ENCODE measurements at regions of chr9 and their contacts with region 1.

Region 1: DNA sequence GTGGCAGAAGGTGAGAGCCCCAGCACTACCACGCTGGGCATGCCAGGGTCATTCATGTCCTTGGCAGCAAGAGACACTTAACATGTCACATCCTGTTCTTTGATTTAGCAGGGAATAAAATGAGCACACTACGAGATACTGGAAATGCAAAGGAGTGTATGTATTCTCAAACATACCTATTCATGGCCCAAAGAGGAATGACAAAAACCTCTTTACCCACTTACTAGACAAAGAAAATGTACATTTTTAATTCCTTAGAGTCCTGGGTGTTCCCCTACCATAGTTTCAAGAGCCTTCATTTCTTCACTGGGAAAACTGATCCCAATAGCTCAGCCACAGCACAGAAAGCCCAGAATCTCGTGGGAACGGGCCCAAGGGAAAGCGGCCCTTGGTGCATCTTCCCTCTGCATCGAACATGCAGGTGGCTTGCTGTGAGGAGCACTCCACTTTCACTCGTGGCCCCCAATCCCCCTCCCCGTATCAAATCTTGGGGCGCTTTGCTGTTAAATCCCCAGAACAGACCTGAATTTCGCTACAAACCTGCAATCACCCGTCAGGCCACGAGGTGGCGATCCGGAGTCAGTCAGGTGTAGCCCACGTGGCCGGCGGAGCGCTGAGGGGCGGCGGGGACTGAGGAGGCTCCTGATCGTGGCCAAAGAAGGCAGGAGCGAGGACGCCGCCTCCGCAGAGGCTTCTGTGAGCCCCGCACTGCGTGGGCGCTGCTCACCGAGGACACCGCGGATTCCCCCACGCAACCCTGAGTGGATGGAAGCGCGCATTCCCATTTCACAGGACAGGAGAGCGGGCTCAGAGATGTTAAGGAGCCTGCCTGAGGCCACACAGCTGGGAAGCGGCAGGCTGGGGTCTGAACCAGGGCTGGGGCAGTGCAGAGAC is 91.4 kb downstream of the LMX1B start:
- DNase-seq: peak; percentile 77
- H3K4me3 ChIP-seq: peak overlapping the region in 1 of 4 donors; percentile 23
- H3K27ac ChIP-seq: no peak overlapping the region
- H3K4me1 ChIP-seq: peaks cover 0 to 11% (median 4%) of the 10 kb centered on the region in 4 donors
- H3K27me3 ChIP-seq: peaks cover 87% of the 10 kb centered on the region
- CTCF ChIP-seq: peak; percentile 88 to 95 (median 90)
- EP300 ChIP-seq: no peak
- POLR2A ChIP-seq: no peak

Region 2: GRCh38 chr9:125878164-125878631 is 826.9 kb before region 1 on chr9:
- in situ Hi-C with region 1: no loop called
- intact Hi-C with region 1: no loop called
- DNase-seq: no peak
- H3K4me3 ChIP-seq: no peak overlapping the region
- H3K27ac ChIP-seq: no peak overlapping the region
- H3K4me1 ChIP-seq: no peaks in the 10 kb centered on the region
- H3K27me3 ChIP-seq: no peaks in the 10 kb centered on the region
- CTCF ChIP-seq: no peak
- EP300 ChIP-seq: no peak
- POLR2A ChIP-seq: no peak

Region 3: DNA sequence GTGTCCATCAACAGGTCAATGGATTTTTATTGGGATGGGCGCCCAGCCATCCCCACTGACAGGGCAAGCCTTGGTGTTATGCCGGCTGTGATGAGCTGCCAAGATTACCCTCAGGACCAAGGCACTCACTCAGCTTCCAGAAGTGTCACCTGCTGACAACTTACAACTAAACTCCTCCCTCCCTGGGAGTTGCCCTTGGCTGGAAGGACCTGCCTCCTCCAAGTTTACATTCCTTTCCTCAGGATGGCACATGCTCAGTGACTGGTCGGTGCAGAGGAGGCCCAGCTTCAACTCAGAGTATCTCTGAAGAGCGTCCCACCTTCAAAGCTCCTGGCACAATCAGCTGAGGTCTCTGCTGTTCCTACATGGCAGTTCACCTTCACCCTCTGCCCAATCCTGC is 47.3 kb after region 1 on chr9:
- in situ Hi-C with region 1: no loop called
- intact Hi-C with region 1: no loop called
- DNase-seq: no peak
- H3K4me3 ChIP-seq: no peak overlapping the region
- H3K27ac ChIP-seq: no peak overlapping the region
- H3K4me1 ChIP-seq: peaks cover 0 to 13% (median 7%) of the 10 kb centered on the region in 4 donors
- H3K27me3 ChIP-seq: peaks cover 86% of the 10 kb centered on the region
- CTCF ChIP-seq: no peak
- EP300 ChIP-seq: no peak
- POLR2A ChIP-seq: no peak

Region 4: GRCh38 chr9:126773004-126773607 is 68.0 kb after region 1 on chr9:
- in situ Hi-C with region 1: loop called in 3 of 4 experiments (anchors 5 to 10 kb)
- intact Hi-C with region 1: no loop called
- DNase-seq: no peak
- H3K4me3 ChIP-seq: no peak overlapping the region
- H3K27ac ChIP-seq: no peak overlapping the region
- H3K4me1 ChIP-seq: no peaks in the 10 kb centered on the region
- H3K27me3 ChIP-seq: peaks cover 97% of the 10 kb centered on the region
- CTCF ChIP-seq: peak; percentile 15 to 43 (median 37)
- EP300 ChIP-seq: no peak
- POLR2A ChIP-seq: no peak

Region 5: GRCh38 chr9:126781186-126782052 is 76.3 kb after region 1 on chr9:
- in situ Hi-C with region 1: loop called in 2 of 4 experiments (anchors 10 kb)
- intact Hi-C with region 1: loop called (anchors 1 kb)
- DNase-seq: peak; percentile 84
- H3K4me3 ChIP-seq: no peak overlapping the region
- H3K27ac ChIP-seq: no peak overlapping the region
- H3K4me1 ChIP-seq: peaks cover 0 to 5% (median 2%) of the 10 kb centered on the region in 4 donors
- H3K27me3 ChIP-seq: peaks cover 89% of the 10 kb centered on the region
- CTCF ChIP-seq: peak; percentile 94 to 97 (median 95)
- EP300 ChIP-seq: no peak
- POLR2A ChIP-seq: no peak

Region 6: GRCh38 chr9:127611899-127612790 is 907.0 kb after region 1 on chr9 and contains the start of gene STXBP1:
- in situ Hi-C with region 1: no loop called
- intact Hi-C with region 1: no loop called
- DNase-seq: peak; percentile 91
- H3K4me3 ChIP-seq: peak within 1 kb of the TSS; percentile 47 to 88 (median 78)
- H3K27ac ChIP-seq: peak within 1 kb of the TSS; percentile 85 to 94 (median 89)
- H3K4me1 ChIP-seq: peaks cover 4 to 33% (median 22%) of the 10 kb centered on the region in 4 donors
- H3K27me3 ChIP-seq: peaks cover 48% of the 10 kb centered on the region
- CTCF ChIP-seq: peak in 1 of 5 experiments; percentile 7
- EP300 ChIP-seq: no peak
- POLR2A ChIP-seq: no peak
- total RNA-seq, gene STXBP1: 7.9 to 193 (median 13.3) TPM

Measured in transverse colon (tissue), 4 donors.